ENCODE measurements at regions of chr5 and their contacts with region 1.

Region 1: DNA sequence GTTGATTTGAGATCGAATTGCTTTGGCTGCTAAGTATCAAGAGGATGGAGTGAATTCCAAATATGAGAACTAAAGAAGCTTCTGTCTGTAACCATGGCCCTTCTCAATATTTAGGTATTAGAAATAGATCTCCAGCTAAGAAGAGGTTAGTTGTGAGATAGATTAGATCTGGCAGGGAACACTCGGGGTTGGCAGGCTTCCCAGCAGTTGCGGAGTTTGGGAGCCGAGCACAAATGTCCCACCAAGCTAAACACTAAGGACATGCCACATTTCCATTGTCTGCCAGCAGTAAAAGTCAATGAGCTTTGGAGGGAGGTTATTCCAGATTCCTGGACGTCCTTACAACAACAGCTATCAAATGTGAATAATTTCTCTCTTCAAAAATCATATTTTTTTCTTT is 85.8 kb downstream of the TAF11L14 start:
- DNase-seq: no peak
- H3K4me3 ChIP-seq: no peak overlapping the region
- H3K27ac ChIP-seq: no peak overlapping the region
- H3K4me1 ChIP-seq: no peaks in the 10 kb centered on the region
- H3K27me3 ChIP-seq: no peaks in the 10 kb centered on the region
- CTCF ChIP-seq: no peak
- POLR2A ChIP-seq: no peak

Region 2: DNA sequence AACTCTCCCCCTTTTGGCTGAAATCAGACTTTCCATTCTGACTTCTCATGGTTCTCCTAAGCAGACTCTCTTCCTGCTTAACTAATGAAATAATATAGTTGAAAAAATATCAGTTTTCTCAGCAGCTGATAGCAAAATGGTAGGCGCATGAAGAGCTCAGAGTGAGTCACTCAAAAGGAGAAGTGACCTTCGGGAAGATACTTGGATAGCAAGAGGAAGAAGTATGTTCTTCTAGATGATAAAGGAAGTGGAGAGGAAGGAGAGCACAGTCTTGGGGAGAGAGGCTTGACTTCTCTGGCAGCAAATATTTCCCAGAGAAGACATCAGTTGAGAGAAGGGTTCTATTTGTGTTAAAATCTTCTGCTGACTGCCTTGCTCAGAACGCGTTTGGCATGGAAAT is 15.7 kb after region 1 on chr5:
- intact Hi-C with region 1: loop called (anchors 1 kb)
- DNase-seq: no peak
- H3K4me3 ChIP-seq: no peak overlapping the region
- H3K27ac ChIP-seq: no peak overlapping the region
- H3K4me1 ChIP-seq: no peaks in the 10 kb centered on the region
- H3K27me3 ChIP-seq: no peaks in the 10 kb centered on the region
- CTCF ChIP-seq: no peak
- POLR2A ChIP-seq: no peak

Region 3: GRCh38 chr5:17796757-17797398 is 76.8 kb after region 1 on chr5:
- intact Hi-C with region 1: loop called (anchors 2 kb)
- DNase-seq: no peak
- H3K4me3 ChIP-seq: no peak overlapping the region
- H3K27ac ChIP-seq: no peak overlapping the region
- H3K4me1 ChIP-seq: no peaks in the 10 kb centered on the region
- H3K27me3 ChIP-seq: no peaks in the 10 kb centered on the region
- CTCF ChIP-seq: no peak
- POLR2A ChIP-seq: no peak